ENCODE measurements at regions of chr14 and their contacts with region 1.

Region 1: DNA sequence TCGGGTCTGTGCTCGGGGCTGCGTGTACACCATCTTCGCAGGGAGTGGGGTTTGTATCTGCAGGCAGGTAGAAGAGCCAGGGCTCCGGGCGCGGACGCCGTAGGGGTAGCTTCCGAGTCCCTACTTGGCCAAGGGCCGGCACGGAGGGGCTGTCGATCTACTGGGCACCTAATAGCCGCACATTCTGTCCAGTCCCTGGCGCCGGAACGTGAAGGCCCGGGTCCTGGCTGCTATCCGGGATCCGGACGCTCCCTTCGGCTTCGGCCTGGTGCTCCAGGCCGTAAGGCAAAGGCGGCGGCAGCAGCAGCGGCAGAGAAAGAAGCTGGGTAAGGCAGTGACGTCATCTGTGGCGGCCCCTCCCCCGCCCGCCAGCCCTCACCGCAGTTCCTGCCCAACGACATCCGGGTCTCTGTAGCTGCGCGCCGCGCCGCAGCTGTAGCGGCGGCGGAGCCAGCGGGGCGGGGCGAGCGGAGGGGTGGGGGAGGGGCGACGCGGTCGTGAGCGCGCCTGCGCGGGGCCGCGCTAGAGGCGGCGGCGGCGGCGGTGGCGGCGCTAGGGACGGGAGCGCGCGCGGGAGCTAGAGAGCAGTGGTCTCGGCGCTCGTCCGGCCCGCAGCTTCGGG is at the start of gene PPM1A:
- DNase-seq: peak; percentile 97
- ATAC-seq: peak; percentile 73
- H3K4me3 Mint-ChIP-seq: peak within 1 kb of the TSS; percentile 94
- H3K27ac Mint-ChIP-seq: peak within 1 kb of the TSS; percentile 100
- H3K4me1 Mint-ChIP-seq: peaks cover 50% of the 10 kb centered on the region
- H3K27me3 Mint-ChIP-seq: no peaks in the 10 kb centered on the region
- total RNA-seq, gene PPM1A: 30.4 to 41.5 TPM

Region 2: GRCh38 chr14:59483900-59484638 is 764.7 kb before region 1 on chr14 and contains the starts of genes JKAMP and L3HYPDH:
- CTCF ChIA-PET with region 1: no interaction called
- POLR2A ChIA-PET with region 1: interaction called, 3 read pairs
- intact Hi-C with region 1: loop called in 1 of 2 experiments (anchors 2 kb)
- DNase-seq: peak; percentile 99
- ATAC-seq: peak; percentile 97
- H3K4me3 Mint-ChIP-seq: peak within 1 kb of the TSS; percentile 92
- H3K27ac Mint-ChIP-seq: peak within 1 kb of the TSS; percentile 89
- H3K4me1 Mint-ChIP-seq: peaks cover 57% of the 10 kb centered on the region
- H3K27me3 Mint-ChIP-seq: no peaks in the 10 kb centered on the region
- total RNA-seq, gene JKAMP: 18.0 to 20.2 TPM
- total RNA-seq, gene L3HYPDH: 9.3 to 11.8 TPM

Region 3: GRCh38 chr14:60164712-60165546 is 83.9 kb before region 1 on chr14 and contains the start of gene DHRS7:
- CTCF ChIA-PET with region 1: interaction called, 3 read pairs
- POLR2A ChIA-PET with region 1: no interaction called
- intact Hi-C with region 1: loop called in 1 of 2 experiments (anchors 1 kb)
- DNase-seq: peak; percentile 79
- ATAC-seq: peak; percentile 88
- H3K4me3 Mint-ChIP-seq: peak within 1 kb of the TSS; percentile 99
- H3K27ac Mint-ChIP-seq: peak within 1 kb of the TSS; percentile 99
- H3K4me1 Mint-ChIP-seq: peaks cover 41% of the 10 kb centered on the region
- H3K27me3 Mint-ChIP-seq: no peaks in the 10 kb centered on the region
- total RNA-seq, gene DHRS7: 27.9 to 46.3 TPM

Region 4: GRCh38 chr14:60734465-60735242 is 485.8 kb after region 1 on chr14 and contains the start of gene MNAT1:
- CTCF ChIA-PET with region 1: no interaction called
- POLR2A ChIA-PET with region 1: no interaction called
- intact Hi-C with region 1: loop called in 1 of 2 experiments (anchors 10 kb)
- DNase-seq: peak; percentile 88
- ATAC-seq: peak; percentile 96
- H3K4me3 Mint-ChIP-seq: peak within 1 kb of the TSS; percentile 99
- H3K27ac Mint-ChIP-seq: peak within 1 kb of the TSS; percentile 86
- H3K4me1 Mint-ChIP-seq: peaks cover 18% of the 10 kb centered on the region
- H3K27me3 Mint-ChIP-seq: peaks cover 15% of the 10 kb centered on the region
- total RNA-seq, gene MNAT1: 36.2 to 40.3 TPM